A673 (cell line): ENCODE measurements at regions of chr3 and their contacts with region 1.

Region 1: DNA sequence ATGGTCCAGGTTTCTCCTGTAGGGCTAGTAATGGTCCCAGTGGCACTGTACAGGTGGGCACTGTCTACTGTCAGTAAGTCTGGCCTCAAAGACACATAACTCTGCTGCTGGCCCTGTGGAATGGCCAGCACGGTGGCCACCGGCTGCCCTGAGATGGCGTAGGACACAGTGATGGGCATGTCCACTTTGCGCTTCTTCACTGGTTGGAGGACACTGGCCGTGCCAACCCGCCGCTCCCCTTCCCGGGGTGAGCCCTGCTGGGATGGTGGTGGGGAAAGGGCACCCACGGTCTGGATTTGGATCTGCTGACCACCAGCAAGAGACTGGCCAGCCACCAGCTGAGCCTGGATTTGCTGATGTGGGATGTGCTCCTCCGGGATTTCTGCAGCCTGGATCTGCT is 28.1 kb upstream of the IMPDH2 start:
- DNase-seq: no peak
- H3K4me3 ChIP-seq: no peak overlapping the region
- H3K27ac ChIP-seq: no peak overlapping the region
- H3K4me1 ChIP-seq: no peaks in the 10 kb centered on the region
- H3K27me3 ChIP-seq: no peaks in the 10 kb centered on the region
- CTCF ChIP-seq: no peak

Region 2: DNA sequence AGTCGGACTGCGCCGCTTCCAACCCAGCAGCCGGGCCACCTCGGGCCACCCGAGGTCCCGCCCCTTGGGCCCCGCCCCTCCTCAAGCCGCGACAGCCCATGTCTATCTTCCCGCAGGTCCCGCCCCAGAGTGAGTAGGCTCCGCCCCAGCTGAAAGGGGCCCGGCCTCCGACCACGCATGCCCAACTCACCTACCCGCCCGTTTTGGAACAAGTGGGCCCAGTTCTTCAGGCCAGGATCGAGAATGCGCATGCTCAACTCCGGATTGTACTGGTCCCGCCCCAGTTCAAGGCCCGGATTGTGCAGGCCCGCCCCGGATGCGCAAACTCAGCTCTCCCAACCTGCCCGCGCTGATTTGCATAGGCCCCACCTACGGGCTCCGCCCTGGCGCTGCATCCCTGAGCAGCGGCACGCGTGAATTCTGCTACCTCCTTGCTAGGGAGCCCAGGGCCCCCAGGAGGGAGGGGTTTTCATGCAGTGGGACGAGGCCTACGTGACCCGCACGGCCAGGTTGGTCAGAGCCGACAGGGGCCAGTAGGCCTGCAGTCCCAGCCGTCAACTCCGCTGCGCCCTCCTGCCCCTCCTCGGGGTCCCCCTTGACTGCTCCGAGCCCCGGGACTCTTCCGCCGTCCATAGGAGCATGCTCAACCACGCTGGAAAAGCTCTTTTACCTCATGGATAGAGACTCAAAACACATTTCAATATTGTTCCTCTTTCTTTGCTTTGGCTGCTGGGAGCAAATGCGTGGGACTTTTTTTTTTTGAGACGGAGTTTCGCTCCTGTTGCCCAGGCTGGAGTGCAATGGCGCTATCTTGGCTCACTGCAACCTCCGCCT is 500.3 kb before region 1 on chr3 and contains the start of gene PFKFB4:
- CTCF ChIA-PET with region 1: no interaction called
- POLR2A ChIA-PET with region 1: interaction called, 14 read pairs
- intact Hi-C with region 1: no loop called
- DNase-seq: peak; percentile 96
- H3K4me3 ChIP-seq: peak within 1 kb of the TSS; percentile 60
- H3K27ac ChIP-seq: peak within 1 kb of the TSS; percentile 38
- H3K4me1 ChIP-seq: no peaks in the 10 kb centered on the region
- H3K27me3 ChIP-seq: no peaks in the 10 kb centered on the region
- CTCF ChIP-seq: no peak
- total RNA-seq, gene PFKFB4: 5.0 and 7.2 TPM in 2 replicates

Region 3: DNA sequence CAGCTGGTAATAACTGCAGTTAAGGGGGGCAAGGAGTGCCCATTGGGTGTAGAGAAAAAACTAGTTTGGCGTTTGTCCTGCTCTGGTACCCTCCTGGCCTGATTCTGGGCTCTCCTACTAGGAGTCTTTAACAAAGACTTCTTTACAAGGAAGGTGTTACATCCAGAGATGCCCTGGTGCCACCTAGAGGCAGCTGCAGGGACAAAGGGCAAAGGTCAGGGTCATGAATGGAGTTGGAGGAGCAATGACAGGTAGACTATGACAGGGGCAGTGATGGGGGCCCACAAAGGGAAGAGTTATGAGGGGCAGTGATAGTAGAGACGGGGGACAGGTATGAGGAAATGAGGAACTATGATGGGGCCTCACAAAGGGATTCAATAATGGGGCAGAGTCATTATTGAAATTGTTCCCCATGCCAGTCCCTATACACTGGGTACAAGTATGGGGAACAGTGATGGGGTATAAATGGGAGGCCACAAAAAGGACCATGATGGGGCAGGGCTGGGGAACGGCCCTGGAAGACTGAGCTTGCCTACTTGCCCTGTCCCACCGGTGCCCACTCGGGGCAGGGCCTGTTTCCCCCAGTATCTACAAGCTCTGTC is 100.9 kb after region 1 on chr3:
- CTCF ChIA-PET with region 1: interaction called, 11 read pairs
- POLR2A ChIA-PET with region 1: no interaction called
- intact Hi-C with region 1: no loop called
- DNase-seq: no peak
- H3K4me3 ChIP-seq: no peak overlapping the region
- H3K27ac ChIP-seq: no peak overlapping the region
- H3K4me1 ChIP-seq: no peaks in the 10 kb centered on the region
- H3K27me3 ChIP-seq: no peaks in the 10 kb centered on the region
- CTCF ChIP-seq: no peak; the same call in 1 of the 2 replicates